Activated naive CD4-positive, alpha-beta T cell treated with anti-CD3 and anti-CD28 coated beads for 36 hours (primary cell): ENCODE measurements at regions of chr6 and their contacts with region 1.

Region 1: GRCh38 chr6:30212865-30213666 is at the start of gene TRIM26:
- DNase-seq: peak; percentile 99
- H3K4me3 Mint-ChIP-seq: peak within 1 kb of the TSS; percentile 94
- H3K27ac Mint-ChIP-seq: peak within 1 kb of the TSS; percentile 99
- H3K4me1 Mint-ChIP-seq: peaks cover 41% of the 10 kb centered on the region
- H3K27me3 Mint-ChIP-seq: no peaks in the 10 kb centered on the region
- total RNA-seq, gene TRIM26: 36.8 to 38.7 TPM

Region 2: GRCh38 chr6:30259140-30260035 is 46.3 kb after region 1 on chr6:
- CTCF ChIA-PET with region 1: no interaction called
- intact Hi-C with region 1: loop called (anchors 1 kb)
- DNase-seq: peak; percentile 86
- H3K4me3 Mint-ChIP-seq: peak overlapping the region; percentile 85
- H3K27ac Mint-ChIP-seq: peak overlapping the region; percentile 77
- H3K4me1 Mint-ChIP-seq: peaks cover 11% of the 10 kb centered on the region
- H3K27me3 Mint-ChIP-seq: no peaks in the 10 kb centered on the region

Region 3: DNA sequence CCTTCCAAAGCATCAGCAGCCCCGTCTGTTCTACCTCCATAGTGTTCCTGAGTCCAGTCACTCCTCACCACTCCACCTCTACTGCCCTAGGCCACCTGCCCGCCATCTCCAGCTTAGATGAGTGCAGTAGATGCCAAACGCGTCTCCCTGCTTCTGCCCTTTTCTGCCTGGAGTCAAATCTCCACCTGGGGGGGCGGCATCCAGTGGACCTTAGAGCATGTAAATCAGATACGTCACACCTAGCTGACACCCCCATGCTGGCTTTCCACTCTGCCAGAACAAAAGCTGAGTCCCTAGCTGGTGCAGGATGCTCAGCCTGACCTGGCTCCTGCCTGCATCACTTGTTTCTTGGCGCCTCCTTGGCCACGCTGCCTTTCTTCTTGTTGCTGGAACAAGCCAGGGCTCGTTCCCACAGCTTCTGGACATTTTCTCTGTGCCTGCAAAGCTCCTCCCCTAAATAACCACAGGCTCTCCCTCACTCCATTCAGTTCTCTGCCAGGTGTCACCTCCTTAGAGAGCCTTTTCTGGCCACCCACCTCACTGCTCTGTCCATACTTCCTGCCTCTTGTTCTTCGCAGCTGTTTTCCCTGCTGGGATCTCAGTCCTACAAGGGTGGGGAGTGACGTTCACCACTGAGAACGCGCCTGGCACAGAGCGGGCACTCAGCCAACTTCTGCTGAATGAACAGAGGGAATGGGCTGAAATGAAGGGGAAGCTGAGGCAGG is 677.0 kb after region 1 on chr6:
- CTCF ChIA-PET with region 1: no interaction called
- intact Hi-C with region 1: no loop called
- DNase-seq: no peak
- H3K4me3 Mint-ChIP-seq: no peak overlapping the region
- H3K27ac Mint-ChIP-seq: no peak overlapping the region
- H3K4me1 Mint-ChIP-seq: peaks cover 19% of the 10 kb centered on the region
- H3K27me3 Mint-ChIP-seq: no peaks in the 10 kb centered on the region